Panc1 (cell line): ENCODE measurements at regions of chr15 and their contacts with region 1.

Region 1: GRCh38 chr15:70036585-70037291 is 61.0 kb downstream of the TLE3 start:
- DNase-seq: no peak
- ATAC-seq: no peak
- H3K4me3 ChIP-seq: no peak overlapping the region
- H3K27ac ChIP-seq: no peak overlapping the region
- H3K4me1 ChIP-seq: no peaks in the 10 kb centered on the region
- H3K27me3 ChIP-seq: no peaks in the 10 kb centered on the region
- CTCF ChIP-seq: no peak

Region 2: DNA sequence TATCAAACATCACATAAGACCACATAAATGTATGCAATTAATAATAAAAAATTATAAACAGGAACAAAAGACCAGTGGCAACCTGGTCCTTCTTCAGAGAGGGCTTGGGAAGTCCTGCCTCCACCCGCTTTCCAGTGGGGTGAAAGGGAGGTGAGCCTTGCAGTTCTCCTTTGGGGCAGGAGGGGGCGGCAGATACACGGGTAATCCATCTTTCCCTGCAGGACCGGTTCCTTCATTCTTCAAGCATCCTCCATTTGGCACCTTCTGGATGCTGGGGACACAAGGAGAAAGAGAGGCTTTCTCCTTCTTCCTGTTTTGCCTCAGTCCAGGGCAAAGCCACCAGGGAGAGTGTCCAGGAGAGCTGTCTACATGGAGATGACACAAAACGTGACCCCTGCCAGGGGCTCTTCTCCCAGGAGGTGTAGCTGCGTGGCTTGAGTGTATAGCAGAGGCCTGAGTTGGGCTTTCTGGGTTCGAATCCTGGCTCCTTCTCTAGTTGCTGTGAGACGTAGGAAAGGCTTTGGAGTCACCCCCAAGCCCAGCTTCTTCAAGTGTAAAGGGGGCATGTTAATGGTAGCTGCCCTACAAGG is 560.9 kb before region 1 on chr15:
- CTCF ChIA-PET with region 1: no interaction called
- POLR2A ChIA-PET with region 1: no interaction called
- in situ Hi-C with region 1: no loop called
- intact Hi-C with region 1: no loop called
- DNase-seq: peak; percentile 64
- ATAC-seq: peak; percentile 92
- H3K4me3 ChIP-seq: no peak overlapping the region
- H3K27ac ChIP-seq: no peak overlapping the region
- H3K4me1 ChIP-seq: no peaks in the 10 kb centered on the region
- H3K27me3 ChIP-seq: no peaks in the 10 kb centered on the region
- CTCF ChIP-seq: peak; percentile 97

Region 3: DNA sequence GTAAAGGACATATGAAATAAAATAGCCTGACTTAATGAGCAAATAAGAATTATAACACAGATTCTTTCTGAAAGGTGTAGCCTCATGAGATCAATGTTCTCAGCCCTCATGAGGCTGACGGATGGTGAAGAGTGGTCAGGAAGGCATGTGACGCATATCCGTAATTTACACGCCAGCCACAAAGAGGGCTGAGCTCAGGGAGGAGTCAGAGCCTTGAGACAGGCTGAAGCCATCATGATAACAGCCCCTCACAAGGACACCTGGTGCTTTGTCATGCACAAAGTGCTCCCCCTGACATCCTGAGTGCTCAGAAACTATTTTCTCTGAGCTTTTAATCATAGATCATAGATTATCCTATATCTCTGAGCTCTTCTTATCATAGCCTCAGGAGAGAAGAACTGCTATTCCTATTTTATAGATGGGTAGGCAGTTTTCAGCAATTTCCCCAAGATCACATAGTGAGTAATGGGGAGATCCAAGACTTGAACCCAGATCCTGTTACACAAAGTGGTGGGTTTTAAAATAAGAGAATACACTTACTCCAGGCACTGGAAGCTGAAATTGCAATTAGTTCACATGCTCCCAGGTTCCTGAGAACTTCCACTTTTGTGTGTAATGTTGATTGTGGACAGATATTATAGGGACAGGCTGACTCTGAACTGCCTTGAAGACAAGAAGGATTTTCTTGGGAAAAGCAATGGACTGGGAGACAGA is 317.1 kb before region 1 on chr15:
- CTCF ChIA-PET with region 1: no interaction called
- POLR2A ChIA-PET with region 1: interaction called, 11 read pairs
- in situ Hi-C with region 1: no loop called
- intact Hi-C with region 1: no loop called
- DNase-seq: no peak
- ATAC-seq: no peak
- H3K4me3 ChIP-seq: no peak overlapping the region
- H3K27ac ChIP-seq: no peak overlapping the region
- H3K4me1 ChIP-seq: no peaks in the 10 kb centered on the region
- H3K27me3 ChIP-seq: no peaks in the 10 kb centered on the region
- CTCF ChIP-seq: no peak

Region 4: GRCh38 chr15:69976366-69976994 is 60.3 kb before region 1 on chr15:
- CTCF ChIA-PET with region 1: no interaction called
- POLR2A ChIA-PET with region 1: no interaction called
- in situ Hi-C with region 1: no loop called
- intact Hi-C with region 1: loop called (anchors 10 kb)
- DNase-seq: no peak
- ATAC-seq: no peak
- H3K4me3 ChIP-seq: no peak overlapping the region
- H3K27ac ChIP-seq: no peak overlapping the region
- H3K4me1 ChIP-seq: peaks cover 16% of the 10 kb centered on the region
- H3K27me3 ChIP-seq: no peaks in the 10 kb centered on the region
- CTCF ChIP-seq: no peak

Region 5: GRCh38 chr15:70008697-70009290 is 27.9 kb before region 1 on chr15:
- CTCF ChIA-PET with region 1: no interaction called
- POLR2A ChIA-PET with region 1: no interaction called
- in situ Hi-C with region 1: no loop called
- intact Hi-C with region 1: no loop called
- DNase-seq: no peak
- ATAC-seq: no peak
- H3K4me3 ChIP-seq: no peak overlapping the region
- H3K27ac ChIP-seq: no peak overlapping the region
- H3K4me1 ChIP-seq: no peaks in the 10 kb centered on the region
- H3K27me3 ChIP-seq: no peaks in the 10 kb centered on the region
- CTCF ChIP-seq: no peak

Region 6: GRCh38 chr15:70066447-70066846 is 29.7 kb after region 1 on chr15:
- CTCF ChIA-PET with region 1: no interaction called
- POLR2A ChIA-PET with region 1: no interaction called
- in situ Hi-C with region 1: no loop called
- intact Hi-C with region 1: no loop called
- DNase-seq: no peak
- ATAC-seq: no peak
- H3K4me3 ChIP-seq: no peak overlapping the region
- H3K27ac ChIP-seq: 0 out of 2 replicates have a peak overlapping the region, but pooled peaks have one; percentile 12
- H3K4me1 ChIP-seq: no peaks in the 10 kb centered on the region; the same call in 1 of the 2 replicates
- H3K27me3 ChIP-seq: no peaks in the 10 kb centered on the region
- CTCF ChIP-seq: no peak

Region 7: DNA sequence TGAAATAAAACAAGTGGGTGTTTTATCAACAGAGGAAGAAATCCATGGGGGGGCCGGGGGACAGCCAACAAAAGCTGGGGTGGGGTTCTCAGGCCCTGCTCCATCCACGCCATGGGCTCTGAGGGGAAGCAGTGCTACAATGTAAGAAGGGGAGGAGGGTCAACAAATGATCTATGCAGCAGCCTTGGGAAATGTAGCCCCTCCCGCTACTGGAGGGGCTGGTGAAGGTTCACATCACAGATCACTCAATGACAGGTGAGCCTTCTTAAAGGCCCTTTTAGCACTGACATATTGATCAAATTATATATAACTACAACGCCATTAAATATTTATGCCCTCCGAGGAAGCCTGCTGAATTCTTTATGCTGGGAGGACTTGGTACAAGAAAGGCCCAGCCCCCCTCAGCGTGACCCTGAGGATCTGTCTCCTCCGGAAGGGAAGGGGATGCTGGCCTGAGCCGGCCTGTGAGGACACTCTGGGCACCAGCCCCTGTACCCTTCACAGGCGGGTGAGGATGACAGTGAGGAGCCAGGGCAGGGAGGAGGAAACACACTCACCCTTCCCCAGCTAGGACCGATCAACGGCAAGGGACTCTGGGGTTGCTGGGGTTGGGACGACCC is 45.7 kb after region 1 on chr15:
- CTCF ChIA-PET with region 1: no interaction called
- POLR2A ChIA-PET with region 1: interaction called, 15 read pairs
- in situ Hi-C with region 1: no loop called
- intact Hi-C with region 1: no loop called
- DNase-seq: no peak
- ATAC-seq: no peak
- H3K4me3 ChIP-seq: no peak overlapping the region
- H3K27ac ChIP-seq: no peak overlapping the region
- H3K4me1 ChIP-seq: peaks cover 9% of the 10 kb centered on the region; the same call in 1 of the 2 replicates
- H3K27me3 ChIP-seq: no peaks in the 10 kb centered on the region
- CTCF ChIP-seq: no peak

Region 8: DNA sequence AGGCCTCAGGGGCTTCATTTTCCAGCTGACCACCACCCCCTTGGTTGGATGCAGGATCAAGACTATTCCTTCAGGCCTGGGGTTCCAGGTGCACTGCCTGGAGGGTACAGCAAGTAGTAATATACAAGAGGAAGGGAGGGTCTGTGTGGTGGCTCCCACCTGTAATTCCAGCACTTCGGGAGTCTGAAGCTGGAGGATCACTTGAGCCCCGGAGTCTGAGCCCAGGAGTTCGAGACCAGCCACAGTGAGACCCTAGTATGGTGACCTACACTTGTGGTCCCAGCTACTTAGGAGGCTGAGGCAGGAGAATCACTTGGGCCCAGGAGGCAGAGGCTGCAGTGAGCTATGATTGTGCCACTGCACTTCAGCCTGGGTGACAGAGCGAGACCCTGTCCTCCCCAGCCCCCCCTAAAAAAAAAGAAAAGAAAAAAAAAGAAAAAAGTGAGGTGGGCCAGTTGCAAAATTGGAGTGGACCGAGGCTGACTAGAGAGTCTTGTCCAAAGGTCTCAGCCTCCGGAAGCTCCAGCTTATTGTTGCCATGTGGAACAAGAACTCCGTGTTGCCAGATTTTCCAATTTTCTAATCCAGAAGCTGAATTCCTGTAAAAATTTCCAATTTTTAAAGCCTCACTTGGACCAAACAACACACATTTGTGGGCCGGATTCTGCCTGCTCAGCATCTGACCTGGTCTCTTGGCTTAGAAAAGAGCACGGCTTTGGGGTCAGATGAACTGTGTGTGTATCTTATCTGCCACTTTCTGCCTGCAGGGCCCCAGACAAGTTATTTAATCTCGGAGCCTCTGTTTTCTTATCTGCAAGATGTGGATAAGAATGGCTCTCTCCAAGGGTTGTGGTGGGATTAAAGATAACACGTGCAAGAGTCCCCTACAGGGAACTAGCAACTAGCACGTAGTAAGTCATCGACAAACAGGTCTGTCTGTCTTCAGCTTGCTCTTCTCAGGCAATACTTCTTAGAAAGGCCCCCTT is 134.5 kb after region 1 on chr15:
- CTCF ChIA-PET with region 1: no interaction called
- POLR2A ChIA-PET with region 1: no interaction called
- in situ Hi-C with region 1: no loop called
- intact Hi-C with region 1: no loop called
- DNase-seq: no peak
- ATAC-seq: no peak
- H3K4me3 ChIP-seq: no peak overlapping the region
- H3K27ac ChIP-seq: no peak overlapping the region
- H3K4me1 ChIP-seq: no peaks in the 10 kb centered on the region
- H3K27me3 ChIP-seq: no peaks in the 10 kb centered on the region
- CTCF ChIP-seq: no peak